HepG2 (cell line): ENCODE measurements at regions of chr16 and their contacts with region 1.

Region 1: GRCh38 chr16:21233521-21234150 is at the start of gene ANKS4B:
- DNase-seq: peak; percentile 94
- ATAC-seq: peak; percentile 99
- H3K4me3 ChIP-seq: peak within 1 kb of the TSS; percentile 70 to 80 (median 71)
- H3K27ac ChIP-seq: peak within 1 kb of the TSS; percentile 68
- H3K4me1 ChIP-seq: peaks cover 75% of the 10 kb centered on the region
- H3K27me3 ChIP-seq: no peaks in the 10 kb centered on the region; a peak in 1 of 5 replicates
- CTCF ChIP-seq: peak; percentile 28
- EP300 ChIP-seq: peak in 1 of 2 experiments; percentile 89; a peak in 2 of 4 replicates
- POLR2A ChIP-seq: peak; percentile 72 to 91
- RAD21 ChIP-seq: no peak
- total RNA-seq, gene ANKS4B: 30.0 and 37.7 TPM in 2 replicates

Region 2: GRCh38 chr16:21169249-21169981 is 64.2 kb before region 1 on chr16:
- CTCF ChIA-PET with region 1: no interaction called
- POLR2A ChIA-PET with region 1: no interaction called
- in situ Hi-C with region 1: no loop called
- intact Hi-C with region 1: no loop called
- DNase-seq: no peak
- ATAC-seq: peak; percentile 40; the same call in 2 of the 3 replicates
- H3K4me3 ChIP-seq: no peak overlapping the region
- H3K27ac ChIP-seq: no peak overlapping the region
- H3K4me1 ChIP-seq: no peaks in the 10 kb centered on the region
- H3K27me3 ChIP-seq: no peaks in the 10 kb centered on the region
- CTCF ChIP-seq: no peak
- EP300 ChIP-seq: no peak
- POLR2A ChIP-seq: no peak
- RAD21 ChIP-seq: no peak

Region 3: GRCh38 chr16:21184834-21185233 is 48.8 kb before region 1 on chr16:
- CTCF ChIA-PET with region 1: no interaction called
- POLR2A ChIA-PET with region 1: interaction called, 14 read pairs
- in situ Hi-C with region 1: no loop called
- intact Hi-C with region 1: loop called (anchors 1 kb)
- DNase-seq: no peak
- ATAC-seq: no peak
- H3K4me3 ChIP-seq: no peak overlapping the region
- H3K27ac ChIP-seq: no peak overlapping the region
- H3K4me1 ChIP-seq: peaks cover 45% of the 10 kb centered on the region
- H3K27me3 ChIP-seq: no peaks in the 10 kb centered on the region
- CTCF ChIP-seq: no peak
- EP300 ChIP-seq: no peak
- POLR2A ChIP-seq: no peak
- RAD21 ChIP-seq: no peak

Region 4: GRCh38 chr16:21190599-21190998 is 43.0 kb before region 1 on chr16:
- CTCF ChIA-PET with region 1: no interaction called
- POLR2A ChIA-PET with region 1: interaction called, 14 read pairs
- in situ Hi-C with region 1: no loop called
- intact Hi-C with region 1: loop called (anchors 1 kb)
- DNase-seq: no peak
- ATAC-seq: no peak
- H3K4me3 ChIP-seq: no peak overlapping the region
- H3K27ac ChIP-seq: no peak overlapping the region
- H3K4me1 ChIP-seq: peaks cover 30% of the 10 kb centered on the region
- H3K27me3 ChIP-seq: peaks cover 0 to 22% of the 10 kb centered on the region in 2 experiments; a peak in 2 of 5 replicates
- CTCF ChIP-seq: no peak
- EP300 ChIP-seq: no peak
- POLR2A ChIP-seq: no peak
- RAD21 ChIP-seq: no peak

Region 5: DNA sequence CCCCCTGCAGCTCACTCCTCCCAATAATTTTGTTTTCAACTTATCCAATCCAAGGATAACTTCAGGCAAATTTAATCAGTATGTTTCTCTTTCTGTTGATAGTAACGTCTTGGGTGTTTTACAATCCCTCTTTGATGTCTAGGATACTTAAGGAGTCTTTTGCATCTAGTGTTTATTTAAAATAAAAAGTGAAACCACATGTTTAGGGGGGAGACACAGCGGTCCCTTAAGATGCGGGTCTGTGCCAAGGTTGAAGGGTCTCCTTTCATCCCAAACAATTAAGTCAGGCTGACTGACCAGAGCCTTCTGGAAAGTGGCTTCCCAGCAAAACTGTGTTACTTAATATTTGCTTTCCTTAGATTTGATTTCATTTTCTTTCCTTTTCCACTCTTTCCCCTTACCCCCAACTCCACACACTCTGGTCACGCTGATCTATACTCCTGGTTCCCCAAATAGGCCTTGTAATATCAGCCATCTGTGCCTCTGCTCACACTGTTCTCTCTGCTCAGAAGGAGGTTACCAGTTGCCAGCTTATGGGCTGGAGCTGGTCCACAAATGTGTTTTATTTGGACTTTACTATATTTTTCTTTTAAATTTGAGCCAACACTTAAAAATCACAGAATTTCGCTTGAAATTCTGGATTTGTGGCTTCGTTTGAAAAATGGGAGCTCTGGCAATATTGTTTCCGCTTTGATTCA is 11.0 kb after region 1 on chr16:
- CTCF ChIA-PET with region 1: no interaction called
- POLR2A ChIA-PET with region 1: interaction called, 11 read pairs
- in situ Hi-C with region 1: no loop called
- intact Hi-C with region 1: no loop called
- DNase-seq: no peak
- ATAC-seq: peak; percentile 45; the same call in 1 of the 3 replicates
- H3K4me3 ChIP-seq: no peak overlapping the region
- H3K27ac ChIP-seq: peak overlapping the region; percentile 14
- H3K4me1 ChIP-seq: peaks cover 43% of the 10 kb centered on the region
- H3K27me3 ChIP-seq: no peaks in the 10 kb centered on the region
- CTCF ChIP-seq: no peak
- EP300 ChIP-seq: no peak
- POLR2A ChIP-seq: no peak
- RAD21 ChIP-seq: no peak

Region 6: GRCh38 chr16:21256636-21257035 is 23.0 kb after region 1 on chr16:
- CTCF ChIA-PET with region 1: no interaction called
- POLR2A ChIA-PET with region 1: interaction called, 34 read pairs
- in situ Hi-C with region 1: no loop called
- intact Hi-C with region 1: loop called (anchors 2 kb)
- DNase-seq: no peak
- ATAC-seq: no peak
- H3K4me3 ChIP-seq: no peak overlapping the region
- H3K27ac ChIP-seq: no peak overlapping the region
- H3K4me1 ChIP-seq: peaks cover 34% of the 10 kb centered on the region
- H3K27me3 ChIP-seq: no peaks in the 10 kb centered on the region
- CTCF ChIP-seq: no peak
- EP300 ChIP-seq: no peak
- POLR2A ChIP-seq: no peak
- RAD21 ChIP-seq: no peak

Region 7: GRCh38 chr16:21263640-21264570 is 30.3 kb after region 1 on chr16:
- CTCF ChIA-PET with region 1: no interaction called
- POLR2A ChIA-PET with region 1: interaction called, 34 read pairs
- in situ Hi-C with region 1: no loop called
- intact Hi-C with region 1: loop called (anchors 2 kb)
- DNase-seq: peak; percentile 81
- ATAC-seq: peak; percentile 76
- H3K4me3 ChIP-seq: peak overlapping the region; percentile 23 to 50 (median 45)
- H3K27ac ChIP-seq: peak overlapping the region; percentile 46
- H3K4me1 ChIP-seq: peaks cover 68% of the 10 kb centered on the region
- H3K27me3 ChIP-seq: no peaks in the 10 kb centered on the region
- CTCF ChIP-seq: peak; percentile 38
- EP300 ChIP-seq: no peak
- POLR2A ChIP-seq: peak; percentile 40 to 60; a peak in 3 of 4 replicates
- RAD21 ChIP-seq: no peak

Region 8: DNA sequence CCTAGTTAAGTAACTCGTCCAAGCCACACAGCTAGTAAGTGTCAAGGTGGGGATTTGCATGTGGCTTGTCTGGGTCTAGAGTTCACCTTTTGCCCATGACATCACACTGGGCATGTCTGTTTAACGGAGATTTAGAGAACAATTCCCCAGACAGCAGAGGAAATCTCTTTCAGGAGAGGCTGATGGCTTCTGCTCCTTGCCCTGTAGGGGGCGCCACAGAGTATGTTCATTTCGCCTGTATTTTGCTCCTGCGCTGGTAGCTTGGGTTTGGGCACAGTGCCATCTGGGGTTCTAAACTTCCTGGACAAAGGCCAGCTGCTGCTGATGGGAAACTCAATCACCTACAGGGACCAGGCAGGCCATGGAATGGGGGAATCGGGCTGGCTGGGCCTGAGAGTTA is 450.6 kb after region 1 on chr16:
- CTCF ChIA-PET with region 1: no interaction called
- POLR2A ChIA-PET with region 1: no interaction called
- in situ Hi-C with region 1: no loop called
- intact Hi-C with region 1: no loop called
- DNase-seq: peak; percentile 50
- ATAC-seq: peak; percentile 58
- H3K4me3 ChIP-seq: no peak overlapping the region
- H3K27ac ChIP-seq: no peak overlapping the region
- H3K4me1 ChIP-seq: no peaks in the 10 kb centered on the region
- H3K27me3 ChIP-seq: peaks cover 2 to 3% of the 10 kb centered on the region in 2 experiments; a peak in 1 of 5 replicates
- CTCF ChIP-seq: peak; percentile 70
- EP300 ChIP-seq: no peak
- POLR2A ChIP-seq: no peak
- RAD21 ChIP-seq: 0 out of 2 replicates have a peak, but pooled peaks have one; percentile 11